GM12878 (cell line): ENCODE measurements at regions of chr11 and their contacts with region 1.

Region 1: DNA sequence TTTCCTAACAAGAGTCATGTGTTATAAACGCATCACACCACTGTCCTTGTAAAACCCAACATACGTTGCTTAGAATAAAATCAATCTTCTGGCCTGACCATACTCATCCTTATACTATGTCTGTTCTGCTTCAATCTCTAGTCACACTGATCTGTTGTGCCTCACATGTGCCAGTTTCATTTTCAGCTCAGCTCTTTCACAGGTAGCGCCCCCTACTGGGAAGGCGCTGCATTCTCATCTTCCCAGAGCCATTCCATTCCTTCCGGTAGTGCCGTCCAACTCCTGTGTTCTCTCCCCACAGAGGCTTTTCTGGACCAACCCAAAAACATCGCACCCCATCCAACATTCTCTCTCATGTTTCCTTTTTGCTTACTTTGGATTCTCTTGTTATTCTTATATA is 22.2 kb downstream of the CASP5 start:
- DNase-seq: peak; percentile 24
- ATAC-seq: peak; percentile 97
- H3K4me3 ChIP-seq: no peak overlapping the region
- H3K27ac ChIP-seq: no peak overlapping the region
- H3K4me1 ChIP-seq: no peaks in the 10 kb centered on the region
- H3K27me3 ChIP-seq: no peaks in the 10 kb centered on the region
- CTCF ChIP-seq: peak; percentile 73 to 92 (median 91)
- EP300 ChIP-seq: no peak
- POLR2A ChIP-seq: no peak
- RAD21 ChIP-seq: peak; percentile 66

Region 2: DNA sequence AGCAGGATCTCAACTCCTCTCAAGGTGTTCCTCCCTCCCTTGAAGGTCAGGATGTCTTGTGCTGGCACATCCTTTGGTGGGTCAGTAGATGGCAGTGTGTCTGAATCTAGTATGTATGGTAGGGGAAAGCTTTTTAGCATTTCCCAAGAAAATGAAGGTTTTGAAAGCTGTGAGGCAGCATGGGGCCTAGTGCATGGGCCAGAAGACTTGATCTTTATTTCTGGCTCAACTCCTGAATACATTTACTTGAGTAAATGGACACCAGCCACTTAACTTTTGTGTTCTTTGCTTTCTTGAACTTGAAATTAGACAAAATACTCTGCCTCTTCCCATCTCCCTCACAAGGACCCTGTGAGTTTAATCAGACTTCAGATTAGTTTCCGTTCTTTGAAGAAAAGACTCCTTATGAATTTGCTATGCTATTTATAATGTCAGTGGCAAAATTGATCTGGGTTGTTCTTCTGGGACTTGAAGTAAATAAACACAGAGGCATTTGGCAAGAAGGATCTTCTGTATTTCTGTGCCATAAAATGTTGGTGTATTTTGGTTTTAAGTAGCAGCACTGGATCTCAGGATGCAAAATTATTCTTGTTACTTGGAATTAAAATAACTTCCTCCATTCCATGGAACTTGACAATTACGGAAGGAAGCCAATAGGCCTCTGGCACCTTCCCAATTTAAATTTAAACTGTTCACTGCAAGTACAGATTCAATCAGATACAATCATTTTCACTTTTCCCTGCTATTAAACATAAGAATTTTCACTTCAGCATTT is 391.3 kb before region 1 on chr11:
- CTCF ChIA-PET with region 1: interaction called, 3 read pairs
- POLR2A ChIA-PET with region 1: no interaction called
- RAD21 ChIA-PET with region 1: no interaction called
- SMC1A ChIA-PET with region 1: no interaction called
- in situ Hi-C with region 1: loop called (anchors 10 kb)
- intact Hi-C with region 1: no loop called
- DNase-seq: no peak
- ATAC-seq: peak; percentile 86
- H3K4me3 ChIP-seq: no peak overlapping the region
- H3K27ac ChIP-seq: no peak overlapping the region
- H3K4me1 ChIP-seq: no peaks in the 10 kb centered on the region
- H3K27me3 ChIP-seq: no peaks in the 10 kb centered on the region
- CTCF ChIP-seq: peak; percentile 57 to 74 (median 64)
- EP300 ChIP-seq: no peak
- POLR2A ChIP-seq: no peak
- RAD21 ChIP-seq: peak; percentile 73

Region 3: GRCh38 chr11:105245781-105246315 is 245.1 kb after region 1 on chr11:
- CTCF ChIA-PET with region 1: no interaction called
- POLR2A ChIA-PET with region 1: no interaction called
- RAD21 ChIA-PET with region 1: no interaction called
- SMC1A ChIA-PET with region 1: no interaction called
- in situ Hi-C with region 1: no loop called
- intact Hi-C with region 1: no loop called
- DNase-seq: no peak
- ATAC-seq: no peak
- H3K4me3 ChIP-seq: no peak overlapping the region
- H3K27ac ChIP-seq: no peak overlapping the region
- H3K4me1 ChIP-seq: no peaks in the 10 kb centered on the region
- H3K27me3 ChIP-seq: no peaks in the 10 kb centered on the region; a peak in 1 of 4 replicates
- CTCF ChIP-seq: no peak
- EP300 ChIP-seq: no peak
- POLR2A ChIP-seq: no peak
- RAD21 ChIP-seq: no peak